ENCODE measurements at regions of chr18 and their contacts with region 1.

Region 1: DNA sequence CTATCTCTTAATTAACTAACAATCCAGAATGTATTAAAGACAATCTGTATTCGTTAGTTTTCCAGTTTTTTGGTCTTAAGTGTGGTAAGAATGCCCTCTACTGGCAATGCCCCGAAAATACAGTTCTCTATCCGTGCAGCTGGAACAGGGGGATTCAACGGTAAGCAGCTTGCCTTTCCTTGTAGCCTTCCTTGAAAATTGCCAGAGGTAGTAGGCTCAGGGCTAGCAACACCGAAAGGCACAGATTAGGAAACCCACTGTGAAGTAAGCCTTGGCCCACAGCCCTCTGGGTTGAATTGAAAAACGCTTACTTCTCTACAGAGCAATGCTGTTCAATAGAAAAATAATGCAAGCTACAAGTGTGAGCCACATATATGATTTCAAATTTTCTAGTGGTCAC is 17.1 kb upstream of the VPS4B start:
- DNase-seq: peak in 1 of 5 donors; percentile 32
- ATAC-seq: peak; percentile 33 to 76 (median 63)
- H3K4me3 ChIP-seq: no peak overlapping the region
- H3K27ac ChIP-seq: no peak overlapping the region
- H3K4me1 ChIP-seq: peaks cover 0 to 9% (median 0%) of the 10 kb centered on the region in 12 donors
- H3K27me3 ChIP-seq: no peaks in the 10 kb centered on the region
- CTCF ChIP-seq: peak; percentile 57 to 85 (median 78)
- POLR2A ChIP-seq: no peak

Region 2: DNA sequence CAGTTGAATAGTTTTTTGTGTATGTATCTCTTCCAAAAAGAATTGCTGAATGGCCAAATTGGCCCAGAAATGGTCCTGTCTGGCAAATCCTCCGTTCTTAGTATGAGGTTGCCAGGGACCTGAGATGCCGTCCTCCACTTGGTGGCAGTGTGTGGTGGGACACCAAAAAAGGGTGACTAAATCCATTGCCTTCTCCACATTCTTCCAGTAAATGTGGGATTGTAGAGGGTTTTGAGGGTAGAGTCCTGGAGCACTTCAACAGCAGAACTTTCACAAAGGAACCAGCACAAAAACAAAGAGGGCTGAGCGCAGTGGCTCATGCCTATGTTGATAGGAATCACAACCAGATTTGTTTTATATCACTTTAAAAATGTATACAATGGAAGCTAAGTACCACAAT is 319.7 kb before region 1 on chr18:
- intact Hi-C with region 1: loop called in 2 of 10 experiments (anchors 10 kb)
- DNase-seq: peak in 2 of 5 donors; percentile 33 to 37
- ATAC-seq: peak in 3 of 4 donors; percentile 55 to 68 (median 64)
- H3K4me3 ChIP-seq: no peak overlapping the region
- H3K27ac ChIP-seq: no peak overlapping the region
- H3K4me1 ChIP-seq: peaks cover 0 to 14% (median 4%) of the 10 kb centered on the region in 12 donors
- H3K27me3 ChIP-seq: no peaks in the 10 kb centered on the region
- CTCF ChIP-seq: peak; percentile 11 to 67 (median 49)
- POLR2A ChIP-seq: no peak

Region 3: DNA sequence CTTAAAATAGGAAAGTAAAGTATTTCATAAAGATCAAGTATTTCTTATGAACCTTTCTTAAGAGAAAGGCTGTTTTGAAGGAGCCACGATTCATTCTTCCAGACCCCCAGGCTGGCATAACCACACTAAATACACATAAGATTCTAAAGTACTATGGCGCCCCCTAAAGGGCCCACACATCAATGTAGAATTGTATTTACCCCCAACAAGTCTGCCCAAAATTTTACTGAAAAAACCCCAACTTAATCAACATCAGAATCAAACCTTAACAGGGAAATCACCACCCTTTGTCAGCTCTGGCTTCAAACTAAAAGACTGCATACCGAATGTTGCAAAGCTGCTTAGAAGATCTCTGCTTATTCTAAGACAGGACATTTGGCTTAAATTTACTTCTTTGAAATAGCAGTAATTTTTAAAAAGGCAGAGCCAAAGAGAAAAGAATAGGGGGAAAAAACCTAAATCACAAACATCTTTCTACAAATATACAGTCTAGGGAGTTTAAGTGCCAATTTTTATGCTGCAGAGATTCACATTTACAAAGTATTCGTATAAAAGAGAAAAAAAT is 99.3 kb before region 1 on chr18:
- intact Hi-C with region 1: loop called (anchors 1 to 5 kb)
- DNase-seq: no peak
- ATAC-seq: no peak
- H3K4me3 ChIP-seq: no peak overlapping the region
- H3K27ac ChIP-seq: no peak overlapping the region
- H3K4me1 ChIP-seq: peaks cover 0 to 9% (median 0%) of the 10 kb centered on the region in 12 donors
- H3K27me3 ChIP-seq: no peaks in the 10 kb centered on the region
- CTCF ChIP-seq: peak; percentile 36 to 64 (median 47)
- POLR2A ChIP-seq: no peak

Region 4: DNA sequence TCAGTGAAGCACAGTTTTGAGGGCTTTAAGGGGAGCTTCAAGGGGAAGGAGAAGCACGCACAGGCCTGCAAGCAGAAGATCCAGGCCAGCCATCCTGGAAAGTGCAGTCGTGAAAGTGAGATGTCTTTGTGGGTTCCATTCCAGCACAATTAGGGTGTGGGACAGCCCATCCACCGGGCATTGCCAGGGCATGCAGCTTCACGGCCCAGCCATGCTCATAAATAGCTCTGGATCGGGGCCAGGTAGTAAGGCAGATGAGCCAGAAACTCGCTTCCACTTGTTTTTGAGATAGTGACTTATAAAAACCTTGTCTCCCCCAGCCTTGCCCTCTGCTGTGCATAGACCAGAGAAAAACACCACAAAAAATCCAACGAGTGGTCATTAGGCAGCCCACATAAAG is 93.3 kb before region 1 on chr18:
- intact Hi-C with region 1: loop called in 9 of 10 experiments (anchors 1 to 5 kb)
- DNase-seq: peak in 4 of 5 donors; percentile 53 to 66 (median 60)
- ATAC-seq: peak; percentile 83 to 87 (median 84)
- H3K4me3 ChIP-seq: no peak overlapping the region
- H3K27ac ChIP-seq: peak overlapping the region in 11 of 12 donors; percentile 40 to 81 (median 57)
- H3K4me1 ChIP-seq: peaks cover 0 to 30% (median 15%) of the 10 kb centered on the region in 12 donors
- H3K27me3 ChIP-seq: no peaks in the 10 kb centered on the region
- CTCF ChIP-seq: no peak
- POLR2A ChIP-seq: no peak